ENCODE measurements at regions of chr4 and their contacts with region 1.

Region 1: DNA sequence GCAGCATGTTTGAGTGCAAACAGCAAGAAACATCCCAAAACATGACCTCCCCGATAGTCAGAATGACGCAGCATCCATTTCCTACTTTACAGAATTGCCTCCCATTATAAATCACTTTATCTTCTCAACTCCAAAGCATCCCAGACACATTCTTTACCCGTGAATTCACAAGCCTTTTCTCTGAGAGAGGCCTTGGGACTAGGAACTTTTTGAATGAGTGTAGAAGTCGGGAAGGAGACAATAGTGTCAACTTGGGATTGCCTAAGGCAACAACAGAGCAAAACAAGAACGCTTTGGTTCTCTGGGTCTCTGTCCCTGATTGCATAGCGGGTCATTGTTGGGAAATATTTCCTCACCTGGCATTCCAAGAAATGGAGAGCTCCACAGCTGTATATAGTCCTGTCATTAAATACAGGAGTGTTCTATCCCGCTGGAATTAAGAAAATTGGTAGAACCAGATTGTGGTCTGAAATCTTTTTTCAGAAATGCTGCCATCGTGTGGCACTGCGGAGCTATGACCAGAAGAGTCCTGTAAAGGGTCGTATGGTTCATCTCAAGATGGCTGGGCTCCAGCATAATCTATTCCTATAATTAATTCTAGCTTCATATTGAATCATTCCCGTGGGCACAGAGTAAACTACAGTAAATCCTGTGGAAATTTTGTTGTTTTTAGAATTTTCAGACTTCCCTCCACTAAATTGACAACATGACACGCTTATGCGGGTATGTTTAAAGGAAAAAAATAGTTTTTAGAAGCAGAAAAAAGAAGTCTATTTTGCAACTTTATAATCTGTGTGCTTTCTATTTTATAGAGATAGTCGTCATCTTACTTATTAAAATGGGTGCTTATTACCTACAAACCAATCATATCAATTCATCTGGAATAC is 2.0 kb upstream of the SPP1 start:
- DNase-seq: peak; percentile 78
- H3K4me3 ChIP-seq: peak overlapping the region in 1 of 3 experiments; percentile 39
- H3K27ac ChIP-seq: peak overlapping the region; percentile 69
- H3K4me1 ChIP-seq: peaks cover 13% of the 10 kb centered on the region
- H3K27me3 ChIP-seq: no peaks in the 10 kb centered on the region
- CTCF ChIP-seq: peak; percentile 76 to 80
- POLR2A ChIP-seq: no peak

Region 2: DNA sequence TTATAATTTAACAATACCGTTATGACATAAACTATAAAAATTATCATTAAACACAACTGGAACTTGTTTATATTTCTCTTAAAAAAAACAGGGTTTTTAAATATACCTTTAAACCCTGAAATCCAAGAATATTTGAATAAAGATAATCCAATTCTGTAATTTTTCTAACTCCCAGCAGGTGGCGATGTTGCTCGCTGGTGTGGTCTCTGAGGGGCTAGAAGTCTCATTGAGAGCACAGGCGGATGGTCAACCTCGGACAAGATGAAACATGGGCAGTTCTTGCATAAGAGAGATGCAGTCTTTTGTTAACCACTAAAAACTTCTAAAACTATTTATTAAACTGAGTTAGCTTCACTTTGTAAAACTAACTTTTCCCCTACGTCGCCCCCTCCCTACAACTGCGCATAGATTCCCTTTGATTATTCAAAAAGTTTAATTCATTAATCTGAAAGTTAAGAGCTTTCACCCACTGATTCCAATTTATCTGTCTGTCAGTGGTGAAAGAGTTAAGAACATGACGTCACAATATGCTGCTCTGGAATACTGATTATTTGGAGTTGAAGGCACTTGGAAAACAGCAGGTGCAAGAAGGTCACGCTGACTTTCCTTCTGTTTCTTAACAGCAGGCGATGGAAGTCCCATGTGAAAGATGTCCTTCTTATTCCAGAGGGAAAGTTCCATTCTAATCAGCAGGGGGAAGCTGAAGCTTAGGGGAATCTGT is 293.9 kb before region 1 on chr4:
- CTCF ChIA-PET with region 1: interaction called, 4 read pairs
- POLR2A ChIA-PET with region 1: no interaction called
- dilution Hi-C with region 1: no loop called
- intact Hi-C with region 1: loop called (anchors 2 kb)
- DNase-seq: peak; percentile 52
- H3K4me3 ChIP-seq: no peak overlapping the region
- H3K27ac ChIP-seq: no peak overlapping the region
- H3K4me1 ChIP-seq: no peaks in the 10 kb centered on the region
- H3K27me3 ChIP-seq: no peaks in the 10 kb centered on the region
- CTCF ChIP-seq: peak; percentile 61 to 76
- POLR2A ChIP-seq: no peak

Region 3: GRCh38 chr4:87895964-87896621 is 77.4 kb before region 1 on chr4:
- CTCF ChIA-PET with region 1: interaction called, 6 read pairs
- POLR2A ChIA-PET with region 1: no interaction called
- dilution Hi-C with region 1: no loop called
- intact Hi-C with region 1: loop called (anchors 1 kb)
- DNase-seq: peak; percentile 92
- H3K4me3 ChIP-seq: peak overlapping the region in 1 of 3 experiments; percentile 35
- H3K27ac ChIP-seq: peak overlapping the region; percentile 52
- H3K4me1 ChIP-seq: peaks cover 20% of the 10 kb centered on the region
- H3K27me3 ChIP-seq: no peaks in the 10 kb centered on the region
- CTCF ChIP-seq: no peak
- POLR2A ChIP-seq: no peak

Region 4: GRCh38 chr4:87985097-87985886 is 11.8 kb after region 1 on chr4:
- CTCF ChIA-PET with region 1: interaction called, 38 read pairs
- POLR2A ChIA-PET with region 1: no interaction called
- dilution Hi-C with region 1: no loop called
- intact Hi-C with region 1: no loop called
- DNase-seq: peak; percentile 66
- H3K4me3 ChIP-seq: no peak overlapping the region
- H3K27ac ChIP-seq: no peak overlapping the region
- H3K4me1 ChIP-seq: no peaks in the 10 kb centered on the region
- H3K27me3 ChIP-seq: peaks cover 2 to 3% of the 10 kb centered on the region in 2 experiments
- CTCF ChIP-seq: peak; percentile 63 to 79
- POLR2A ChIP-seq: no peak

Region 5: DNA sequence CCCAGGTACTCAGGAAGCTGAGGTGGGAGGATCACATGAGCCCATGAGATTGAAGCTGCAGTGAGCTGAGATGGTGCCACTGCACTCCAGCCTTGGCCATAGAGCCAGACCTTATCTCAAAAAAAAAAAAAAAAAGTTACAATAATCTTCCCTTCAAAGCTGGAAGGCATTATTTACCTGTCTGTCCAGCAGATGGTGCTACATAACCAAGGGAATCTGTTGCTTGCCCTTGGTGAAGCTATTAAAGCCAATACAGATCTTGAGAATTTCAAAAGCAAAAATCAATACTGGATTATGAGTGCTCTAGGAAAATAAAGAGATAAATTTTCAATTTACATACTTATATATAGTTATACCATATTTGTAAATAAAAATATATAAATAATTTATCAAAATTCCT is 59.8 kb after region 1 on chr4:
- CTCF ChIA-PET with region 1: interaction called, 10 read pairs
- POLR2A ChIA-PET with region 1: no interaction called
- dilution Hi-C with region 1: no loop called
- intact Hi-C with region 1: no loop called
- DNase-seq: peak; percentile 69
- H3K4me3 ChIP-seq: no peak overlapping the region
- H3K27ac ChIP-seq: no peak overlapping the region
- H3K4me1 ChIP-seq: no peaks in the 10 kb centered on the region
- H3K27me3 ChIP-seq: no peaks in the 10 kb centered on the region
- CTCF ChIP-seq: peak; percentile 43 to 55
- POLR2A ChIP-seq: no peak

Measured in endothelial cell of umbilical vein (primary cell).